PC-9 (cell line): ENCODE measurements at regions of chr11 and their contacts with region 1.

Region 1: GRCh38 chr11:112156956-112157766 is 6.7 kb downstream of the IL18 start:
- DNase-seq: peak; percentile 65 to 100
- H3K4me3 ChIP-seq: peak overlapping the region; percentile 5; the same call in 1 of the 2 replicates
- H3K27ac ChIP-seq: peak overlapping the region; percentile 85
- H3K4me1 ChIP-seq: peaks cover 65% of the 10 kb centered on the region
- H3K27me3 ChIP-seq: no peaks in the 10 kb centered on the region
- CTCF ChIP-seq: no peak

Region 2: DNA sequence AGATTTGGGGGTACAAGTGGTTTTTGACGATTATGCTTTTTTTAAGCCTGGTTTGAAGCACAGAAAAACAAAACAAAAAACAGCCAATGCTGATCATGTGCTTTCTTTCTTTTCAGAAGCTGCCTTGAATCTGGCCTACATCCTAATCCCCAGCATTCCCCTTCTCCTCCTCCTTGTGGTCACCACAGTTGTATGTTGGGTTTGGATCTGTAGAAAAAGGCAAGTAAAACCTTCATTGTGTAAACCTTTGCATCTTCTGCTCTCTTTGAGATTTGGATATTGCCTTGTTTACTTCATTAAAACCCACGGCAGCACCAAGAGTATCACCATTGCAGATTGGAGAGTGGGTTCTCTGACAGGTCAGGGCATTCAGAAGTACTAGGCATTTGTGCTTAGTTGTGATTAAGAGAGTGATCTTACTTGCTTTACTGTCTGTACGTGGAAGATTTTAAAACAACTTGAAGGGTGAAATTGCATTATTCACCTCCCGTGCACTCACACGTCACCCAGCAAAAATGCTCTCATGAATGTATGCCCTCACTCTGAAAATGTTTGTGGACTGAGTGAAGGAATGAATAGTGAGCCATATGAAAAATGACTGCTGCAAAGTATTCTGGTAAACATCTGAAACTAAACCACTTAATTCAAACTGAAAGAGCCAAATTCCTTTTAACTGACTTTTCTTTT is 599.6 kb before region 1 on chr11:
- CTCF ChIA-PET with region 1: no interaction called
- POLR2A ChIA-PET with region 1: no interaction called
- intact Hi-C with region 1: loop called (anchors 5 kb)
- DNase-seq: peak; percentile 43 to 58
- H3K4me3 ChIP-seq: no peak overlapping the region
- H3K27ac ChIP-seq: peak overlapping the region; percentile 18; the same call in 1 of the 2 replicates
- H3K4me1 ChIP-seq: peaks cover 41% of the 10 kb centered on the region
- H3K27me3 ChIP-seq: no peaks in the 10 kb centered on the region
- CTCF ChIP-seq: no peak

Region 3: DNA sequence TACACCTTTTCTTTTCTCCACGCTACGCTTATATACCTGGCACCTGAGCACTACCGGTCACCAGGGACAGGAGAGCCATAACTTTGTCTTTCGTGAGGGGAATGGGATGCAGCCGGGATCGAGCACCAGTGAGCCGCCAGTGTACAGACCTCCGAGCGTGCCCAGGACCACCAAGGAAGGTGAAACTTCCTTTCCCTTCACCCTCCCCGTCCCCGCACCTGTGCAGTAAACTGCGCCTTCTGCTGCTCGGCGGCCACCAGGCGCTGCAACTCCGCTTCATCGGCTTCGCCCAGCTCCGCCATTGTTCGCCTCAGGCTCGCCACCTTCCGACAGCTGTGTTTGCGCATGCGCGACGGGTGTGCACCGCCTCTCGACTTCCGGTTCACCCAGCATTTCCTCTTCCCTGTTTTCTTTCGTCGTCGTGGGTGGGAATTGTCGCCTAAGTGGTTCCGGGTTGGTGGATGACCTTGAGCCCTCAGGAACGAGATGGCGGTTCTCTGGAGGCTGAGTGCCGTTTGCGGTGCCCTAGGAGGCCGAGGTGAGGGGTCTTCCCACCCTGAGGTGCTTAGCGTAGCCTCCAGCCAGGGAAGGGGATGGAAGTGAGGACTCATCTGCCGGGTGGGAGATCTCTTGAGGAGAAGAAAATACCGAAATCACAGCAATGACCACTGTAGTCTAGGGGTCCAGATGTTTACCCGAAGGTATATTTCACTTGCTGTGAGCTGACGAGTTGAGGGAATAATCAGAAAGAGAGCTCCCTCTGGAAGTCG is 70.6 kb before region 1 on chr11 and contains the starts of genes SDHD and TIMM8B:
- CTCF ChIA-PET with region 1: no interaction called
- POLR2A ChIA-PET with region 1: interaction called, 14 read pairs
- intact Hi-C with region 1: no loop called
- DNase-seq: peak; percentile 93 to 95
- H3K4me3 ChIP-seq: peak within 1 kb of the TSS; percentile 96
- H3K27ac ChIP-seq: peak within 1 kb of the TSS; percentile 26
- H3K4me1 ChIP-seq: peaks cover 21% of the 10 kb centered on the region
- H3K27me3 ChIP-seq: no peaks in the 10 kb centered on the region
- CTCF ChIP-seq: no peak
- total RNA-seq, gene SDHD: 99.5 and 122 TPM in 2 replicates
- total RNA-seq, gene TIMM8B: 42.4 and 44.3 TPM in 2 replicates

Region 4: DNA sequence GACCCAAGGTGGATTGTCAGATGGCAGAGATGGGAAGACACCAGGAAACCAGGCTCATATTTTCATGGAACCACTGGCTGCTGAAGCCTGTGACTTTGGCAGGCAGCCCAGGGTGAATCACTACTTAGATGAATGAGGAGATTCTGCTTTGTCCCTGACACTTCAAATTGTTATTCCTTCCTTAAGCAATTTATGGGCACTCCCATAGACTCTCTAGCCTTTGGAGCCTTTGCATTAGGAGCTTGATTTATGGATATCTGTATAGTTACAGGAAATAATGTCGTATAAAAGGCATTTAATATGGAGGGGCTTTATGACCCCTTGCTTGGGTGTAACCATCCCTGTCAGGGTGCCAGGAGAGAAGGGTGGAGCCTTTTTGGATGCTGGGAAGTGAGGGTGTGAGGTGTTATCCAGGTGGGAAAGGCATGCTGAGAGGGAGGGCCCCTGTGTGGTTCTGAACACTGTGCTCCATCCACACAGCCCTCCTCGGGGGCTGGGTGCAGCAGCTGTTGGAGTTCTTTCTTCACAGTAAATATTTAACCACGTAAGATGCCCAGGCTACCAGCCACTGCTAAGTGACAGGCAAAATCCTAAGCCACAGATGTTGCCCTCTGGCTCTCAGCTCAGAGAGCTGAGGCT is 28.6 kb before region 1 on chr11:
- CTCF ChIA-PET with region 1: no interaction called
- POLR2A ChIA-PET with region 1: interaction called, 12 read pairs
- intact Hi-C with region 1: loop called (anchors 1 kb)
- DNase-seq: peak; percentile 81 to 91
- H3K4me3 ChIP-seq: no peak overlapping the region
- H3K27ac ChIP-seq: peak overlapping the region; percentile 25; the same call in 1 of the 2 replicates
- H3K4me1 ChIP-seq: peaks cover 24% of the 10 kb centered on the region
- H3K27me3 ChIP-seq: no peaks in the 10 kb centered on the region
- CTCF ChIP-seq: no peak

Region 5: GRCh38 chr11:112134473-112134872 is 22.7 kb before region 1 on chr11:
- CTCF ChIA-PET with region 1: no interaction called
- POLR2A ChIA-PET with region 1: interaction called, 15 read pairs
- intact Hi-C with region 1: no loop called
- DNase-seq: no peak
- H3K4me3 ChIP-seq: no peak overlapping the region
- H3K27ac ChIP-seq: no peak overlapping the region
- H3K4me1 ChIP-seq: peaks cover 12% of the 10 kb centered on the region
- H3K27me3 ChIP-seq: no peaks in the 10 kb centered on the region
- CTCF ChIP-seq: no peak